Motor neuron (in vitro differentiated cells): ENCODE measurements at regions of chr18 and their contacts with region 1.

Region 1: DNA sequence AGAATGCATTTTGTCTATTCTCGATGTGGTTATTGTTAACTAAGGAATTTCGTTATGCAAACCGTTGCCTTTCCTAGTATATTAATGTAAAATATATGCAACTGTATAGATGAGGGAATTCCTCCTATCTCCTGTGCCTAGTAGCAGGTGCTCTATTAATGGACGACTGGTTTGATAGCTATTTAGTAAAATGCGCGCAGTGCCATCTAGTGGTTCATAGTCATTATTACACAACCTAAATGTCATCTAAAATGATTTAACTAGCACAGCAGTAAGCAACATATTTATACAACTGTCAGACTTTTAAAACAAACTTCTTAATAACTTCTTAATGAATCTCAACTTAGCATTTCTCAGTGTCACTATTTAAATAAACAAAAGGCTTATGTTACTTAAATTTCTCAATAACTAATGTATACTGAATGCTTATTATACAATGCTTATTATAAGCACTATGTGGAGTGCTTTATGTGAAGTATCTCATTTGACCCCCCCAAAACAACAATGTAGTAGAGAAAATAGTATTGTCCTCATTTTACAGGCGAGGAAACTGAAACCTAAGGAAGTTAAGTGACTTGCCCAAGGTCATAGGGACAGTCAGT is 77.9 kb downstream of the DTNA start:
- ATAC-seq: peak in 6 of 8 experiments; percentile 5 to 54 (median 46)
- H3K4me3 ChIP-seq: no peak overlapping the region
- H3K27ac ChIP-seq: no peak overlapping the region
- H3K4me1 ChIP-seq: peaks cover 0 to 3% of the 10 kb centered on the region in 2 donors

Region 2: GRCh38 chr18:34352385-34353163 is 435.5 kb before region 1 on chr18:
- in situ Hi-C with region 1: loop called in 3 of 9 experiments (anchors 25 kb)
- ATAC-seq: peak in 2 of 8 experiments; percentile 35 to 53
- H3K4me3 ChIP-seq: no peak overlapping the region
- H3K27ac ChIP-seq: no peak overlapping the region
- H3K4me1 ChIP-seq: no peaks in the 10 kb centered on the region

Region 3: GRCh38 chr18:34661464-34662111 is 126.4 kb before region 1 on chr18:
- in situ Hi-C with region 1: loop called in 2 of 9 experiments (anchors 25 kb)
- ATAC-seq: peak; percentile 43 to 77 (median 66)
- H3K4me3 ChIP-seq: no peak overlapping the region
- H3K27ac ChIP-seq: no peak overlapping the region
- H3K4me1 ChIP-seq: peaks cover 14 to 22% of the 10 kb centered on the region in 2 donors